ENCODE measurements at regions of chr3 and their contacts with region 1.

Region 1: GRCh38 chr3:10377148-10377725 is 56.3 kb upstream of the SEC13 start:
- DNase-seq: no peak
- H3K4me3 ChIP-seq: no peak overlapping the region
- H3K27ac ChIP-seq: no peak overlapping the region
- H3K4me1 ChIP-seq: peaks cover 0 to 5% (median 2%) of the 10 kb centered on the region in 4 experiments; a peak in 5 of 7 replicates
- H3K27me3 ChIP-seq: no peaks in the 10 kb centered on the region; a peak in 2 of 7 replicates
- CTCF ChIP-seq: no peak
- EP300 ChIP-seq: no peak
- POLR2A ChIP-seq: no peak
- RAD21 ChIP-seq: no peak

Region 2: GRCh38 chr3:10351013-10351735 is 26.1 kb before region 1 on chr3:
- CTCF ChIA-PET with region 1: no interaction called
- POLR2A ChIA-PET with region 1: no interaction called
- DNase-seq: no peak
- H3K4me3 ChIP-seq: no peak overlapping the region
- H3K27ac ChIP-seq: no peak overlapping the region
- H3K4me1 ChIP-seq: peaks cover 0 to 5% (median 0%) of the 10 kb centered on the region in 4 experiments; a peak in 2 of 7 replicates
- H3K27me3 ChIP-seq: no peaks in the 10 kb centered on the region; a peak in 1 of 7 replicates
- CTCF ChIP-seq: no peak
- EP300 ChIP-seq: no peak
- POLR2A ChIP-seq: no peak
- RAD21 ChIP-seq: no peak

Region 3: DNA sequence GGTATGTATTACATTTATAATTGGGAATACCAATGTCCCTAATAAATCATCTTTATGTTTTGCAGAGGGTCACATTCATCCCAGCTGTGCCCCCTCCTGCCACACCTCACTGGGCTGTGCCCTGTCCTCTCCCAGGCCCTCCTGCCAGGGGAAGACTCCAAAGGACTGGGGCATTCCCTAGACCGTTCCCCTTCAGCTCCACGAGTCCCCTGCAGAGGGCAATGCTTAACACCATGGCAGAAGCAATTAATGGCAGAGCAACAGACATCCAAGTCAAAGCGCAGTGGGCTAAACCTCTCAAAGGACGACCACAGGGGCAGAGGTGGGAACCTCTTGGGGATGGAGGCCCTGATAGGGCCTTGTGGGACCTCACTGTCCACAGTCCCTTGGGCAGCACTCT is 15.0 kb after region 1 on chr3:
- CTCF ChIA-PET with region 1: interaction called, 15 read pairs
- POLR2A ChIA-PET with region 1: interaction called, 3 read pairs
- DNase-seq: no peak
- H3K4me3 ChIP-seq: no peak overlapping the region
- H3K27ac ChIP-seq: no peak overlapping the region
- H3K4me1 ChIP-seq: peaks cover 6 to 22% (median 14%) of the 10 kb centered on the region in 4 experiments
- H3K27me3 ChIP-seq: no peaks in the 10 kb centered on the region
- CTCF ChIP-seq: peak; percentile 25 to 35 (median 35); a peak in 3 of 4 replicates
- EP300 ChIP-seq: no peak
- POLR2A ChIP-seq: no peak
- RAD21 ChIP-seq: peak; percentile 29 to 44